Lower leg skin (tissue), 4 donors: ENCODE measurements at regions of chr7 and their contacts with region 1.

Region 1: DNA sequence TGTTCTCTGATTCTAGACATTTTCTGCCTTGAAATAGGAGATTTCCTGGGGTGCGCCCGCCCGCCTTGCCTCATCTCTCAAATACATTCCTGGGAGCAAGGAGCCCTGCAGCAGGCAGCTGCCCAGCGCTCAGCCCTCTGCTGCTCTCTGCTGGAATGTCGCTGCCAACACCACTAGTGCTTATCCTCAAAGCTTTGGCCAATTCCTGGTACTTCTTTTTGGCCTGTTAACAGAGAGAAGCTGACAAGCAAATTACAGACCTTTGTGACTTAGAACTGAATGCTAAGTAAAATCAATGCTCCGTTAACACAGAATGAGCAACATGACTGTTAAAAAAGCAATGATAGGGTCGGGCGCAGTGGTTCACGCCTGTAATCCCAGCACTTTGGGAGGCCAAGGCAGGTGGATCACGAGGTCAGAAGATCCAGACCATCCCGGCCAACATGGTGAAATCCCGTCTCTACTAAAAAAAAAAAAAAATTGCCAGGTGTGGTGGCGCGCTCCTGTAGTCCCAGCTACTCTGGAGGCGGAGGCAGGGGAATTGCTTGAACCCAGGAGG is 41.9 kb upstream of the SYPL1 start:
- DNase-seq: peak; percentile 80 to 97
- H3K4me3 ChIP-seq: no peak overlapping the region
- CTCF ChIP-seq: peak in 2 of 3 donors; percentile 40 to 86
- POLR2A ChIP-seq: no peak

Region 2: GRCh38 chr7:106050011-106050745 is 103.8 kb before region 1 on chr7:
- intact Hi-C with region 1: loop called (anchors 5 kb)
- DNase-seq: no peak
- H3K4me3 ChIP-seq: no peak overlapping the region
- CTCF ChIP-seq: no peak
- POLR2A ChIP-seq: no peak